Vagina (tissue), 2 donors: ENCODE measurements at regions of chr12 and their contacts with region 1.

Region 1: GRCh38 chr12:58346032-58346632 is 404.8 kb downstream of the ATP23 start:
- DNase-seq: no peak
- H3K4me3 ChIP-seq: no peak overlapping the region
- H3K27ac ChIP-seq: no peak overlapping the region
- H3K4me1 ChIP-seq: no peaks in the 10 kb centered on the region
- H3K27me3 ChIP-seq: no peaks in the 10 kb centered on the region
- CTCF ChIP-seq: peak; percentile 54 to 85 (median 84)
- POLR2A ChIP-seq: no peak

Region 2: DNA sequence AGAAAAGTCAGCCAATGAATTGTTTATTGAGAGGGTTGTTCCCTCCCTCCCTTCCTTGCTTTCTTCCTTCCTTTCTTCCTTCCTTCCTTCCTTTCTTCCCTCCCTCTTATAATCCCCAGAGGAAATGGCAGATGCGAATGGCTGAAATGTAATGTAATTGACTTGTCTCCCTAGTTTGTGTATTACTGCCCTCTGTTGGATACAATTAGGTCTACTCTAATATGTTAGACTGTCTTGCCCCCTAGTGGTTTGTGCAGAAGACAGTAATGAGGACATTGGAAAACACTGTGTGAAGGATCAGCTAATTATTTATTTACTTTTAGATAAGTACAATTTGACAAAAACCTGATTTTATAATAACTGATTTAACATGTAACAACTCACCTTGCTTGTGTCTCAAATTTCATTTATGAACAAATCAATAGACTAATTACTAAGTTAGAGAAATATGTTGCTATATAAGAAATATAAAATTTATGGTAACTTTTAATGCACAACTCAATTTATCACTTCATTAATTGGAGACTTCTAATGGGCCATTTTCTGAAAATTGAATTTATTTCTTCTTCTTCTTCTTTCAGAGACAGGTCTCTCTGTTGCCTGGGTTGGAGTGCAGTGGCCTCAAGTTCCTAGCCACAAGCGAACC is 804.0 kb after region 1 on chr12:
- intact Hi-C with region 1: loop called (anchors 10 kb)
- DNase-seq: no peak
- H3K4me3 ChIP-seq: no peak overlapping the region
- H3K27ac ChIP-seq: no peak overlapping the region
- H3K4me1 ChIP-seq: no peaks in the 10 kb centered on the region
- H3K27me3 ChIP-seq: no peaks in the 10 kb centered on the region
- CTCF ChIP-seq: peak; percentile 87 to 99 (median 92)
- POLR2A ChIP-seq: no peak